Head of caudate nucleus (tissue), 42 donors: ENCODE measurements at regions of chr3 and their contacts with region 1.

Region 1: DNA sequence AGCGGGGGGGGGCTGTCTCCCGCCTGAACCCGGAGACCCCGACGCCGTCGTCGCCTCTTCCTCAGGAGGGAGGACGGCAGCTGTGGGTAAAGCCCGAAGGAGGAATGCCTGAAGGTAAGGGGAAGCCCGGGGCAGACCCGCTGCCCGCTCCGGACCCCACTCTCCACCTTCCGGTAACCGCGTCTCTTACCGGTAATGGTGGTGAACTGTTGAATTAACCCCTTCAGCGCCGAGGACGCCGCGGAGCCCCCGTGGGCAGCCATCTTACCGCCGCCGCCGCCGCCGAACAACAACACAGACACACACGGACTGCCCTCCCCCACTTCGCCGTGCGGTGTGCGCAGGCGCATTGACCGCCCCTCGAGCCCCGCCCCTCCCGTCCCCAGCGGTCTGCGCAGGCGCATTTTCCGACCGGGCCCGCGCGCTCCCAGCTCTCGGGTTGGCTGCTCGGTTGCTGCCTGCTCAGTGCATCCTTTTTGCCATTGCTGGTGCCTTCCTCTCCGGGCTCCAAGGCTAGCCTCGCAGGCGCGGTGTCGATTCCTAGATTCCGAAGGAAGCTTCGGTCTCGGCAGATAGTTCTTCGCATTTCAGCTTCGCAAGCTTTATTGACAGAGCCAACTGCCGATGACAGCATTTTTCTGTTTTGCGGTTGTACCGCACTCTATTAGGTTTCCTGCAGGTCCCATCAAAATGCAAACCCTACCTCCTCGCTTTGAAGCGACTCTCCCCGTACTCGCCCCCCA is at the start of gene UBXN7:
- DNase-seq: peak; percentile 82 to 98 (median 95)

Region 2: DNA sequence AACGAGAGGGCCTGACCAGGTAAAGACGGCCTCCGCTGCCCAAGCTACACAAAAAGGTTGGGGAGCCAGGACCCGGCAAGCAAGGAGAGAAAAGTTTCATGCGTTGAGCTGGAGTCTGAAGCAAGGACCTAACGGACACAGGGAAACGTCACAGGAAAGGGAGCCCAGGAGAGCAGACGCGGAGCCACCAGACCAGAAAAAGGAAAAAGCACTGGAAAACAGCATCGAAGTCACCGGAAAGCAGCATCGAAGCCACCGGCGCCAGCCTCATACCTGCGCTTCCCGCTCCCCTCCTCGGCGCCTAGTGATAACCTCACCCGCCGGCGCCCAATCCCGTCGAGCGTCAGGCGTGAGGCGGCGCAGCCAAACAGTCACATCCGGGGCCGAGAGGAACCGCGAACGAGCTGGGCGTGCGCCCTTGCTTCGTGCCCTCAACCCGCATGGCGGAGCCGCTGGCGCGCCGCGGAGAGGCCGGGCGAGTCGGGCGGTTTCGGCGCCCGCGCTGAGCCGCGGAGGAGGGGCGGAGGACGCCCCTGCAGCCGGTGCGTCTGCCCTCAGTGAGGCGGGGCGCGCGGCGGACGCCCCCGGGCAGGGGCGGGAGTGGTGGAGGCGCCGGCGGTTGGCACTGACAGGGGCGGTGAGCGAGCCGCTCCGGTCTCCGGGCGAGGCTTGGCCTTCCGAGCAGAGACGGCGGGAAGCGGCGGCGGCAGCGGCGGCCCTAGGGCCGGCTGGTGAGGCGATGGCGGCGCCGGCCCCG is 136.1 kb after region 1 on chr3 and contains the starts of genes FBXO45 and WDR53:
- intact Hi-C with region 1: loop called (anchors 5 kb)
- DNase-seq: peak; percentile 86 to 98 (median 95)